Calu3 (cell line): ENCODE measurements at regions of chr7 and their contacts with region 1.

Region 1: GRCh38 chr7:30225863-30226613 is 58.4 kb upstream of the ZNRF2 start:
- DNase-seq: peak; percentile 82
- H3K4me3 Mint-ChIP-seq: peak overlapping the region; percentile 50
- H3K27ac Mint-ChIP-seq: peak overlapping the region; percentile 87
- H3K4me1 Mint-ChIP-seq: peaks cover 36% of the 10 kb centered on the region
- H3K27me3 Mint-ChIP-seq: peaks cover 2% of the 10 kb centered on the region
- CTCF ChIP-seq: no peak

Region 2: DNA sequence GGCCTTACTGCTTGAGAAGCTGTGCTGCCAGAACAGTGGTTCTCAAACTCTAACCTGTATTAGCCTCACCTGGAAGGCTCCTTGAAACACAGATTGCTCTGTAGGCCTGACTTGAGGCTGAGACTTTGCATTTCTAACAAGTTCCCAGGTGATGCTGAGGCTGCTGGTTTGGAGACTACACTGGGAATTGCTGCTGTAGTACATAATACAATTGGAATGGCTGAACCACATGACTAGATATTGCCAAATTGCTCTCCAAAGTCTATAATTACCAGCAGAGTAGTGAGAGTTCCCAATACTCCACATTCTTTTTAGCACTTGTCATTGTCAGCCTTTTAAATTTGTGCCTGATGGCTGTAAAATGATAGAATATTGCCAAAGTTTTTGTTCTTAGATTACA is 158.0 kb before region 1 on chr7:
- CTCF ChIA-PET with region 1: no interaction called
- intact Hi-C with region 1: no loop called
- DNase-seq: no peak
- H3K4me3 Mint-ChIP-seq: no peak overlapping the region
- H3K27ac Mint-ChIP-seq: no peak overlapping the region
- H3K4me1 Mint-ChIP-seq: no peaks in the 10 kb centered on the region
- H3K27me3 Mint-ChIP-seq: no peaks in the 10 kb centered on the region
- CTCF ChIP-seq: no peak

Region 3: DNA sequence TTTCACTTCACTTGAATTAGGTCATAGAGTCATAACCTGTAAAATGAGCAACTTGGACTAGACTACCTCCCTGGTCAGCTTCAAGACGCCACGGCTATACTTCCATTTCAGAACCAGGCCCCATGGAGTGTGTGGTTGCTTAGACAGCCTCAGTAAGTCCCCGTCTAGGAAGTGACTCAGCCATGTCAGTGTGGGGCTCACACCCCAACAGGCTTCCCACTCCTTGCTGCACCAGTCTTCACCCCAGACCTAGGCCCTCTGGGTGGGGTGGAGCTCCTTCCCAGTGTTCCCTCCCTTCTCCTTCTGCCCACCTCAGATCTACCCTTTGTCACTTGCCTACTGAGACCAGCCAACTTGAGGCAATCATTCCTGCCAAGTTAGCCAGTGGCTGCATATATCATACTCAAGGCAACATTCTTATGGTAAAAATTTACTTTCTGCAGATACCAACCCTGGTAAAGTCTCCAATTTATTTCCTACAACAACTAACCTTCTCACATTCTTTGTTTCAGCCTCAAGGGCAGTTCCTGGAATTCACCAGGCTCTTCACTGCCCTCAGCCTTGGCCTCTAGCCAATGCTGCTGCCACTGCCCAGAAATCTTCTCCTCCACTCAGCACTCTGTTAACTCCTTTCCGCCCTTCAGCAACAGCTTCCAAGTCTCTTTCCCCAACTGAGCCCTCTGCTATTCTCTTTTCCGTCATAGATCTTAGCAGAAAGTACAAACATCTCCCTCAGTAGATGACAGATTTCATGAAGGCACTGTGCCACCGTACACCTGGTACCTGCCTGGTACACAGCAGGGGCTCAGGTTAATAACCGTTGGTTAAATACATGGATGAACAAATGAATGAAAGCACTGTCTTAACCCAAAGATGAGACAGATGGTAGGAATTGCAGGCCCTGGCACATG is 27.1 kb after region 1 on chr7:
- CTCF ChIA-PET with region 1: interaction called, 7 read pairs
- intact Hi-C with region 1: loop called (anchors 2 kb)
- DNase-seq: peak; percentile 73
- H3K4me3 Mint-ChIP-seq: peak overlapping the region; percentile 3
- H3K27ac Mint-ChIP-seq: peak overlapping the region; percentile 9
- H3K4me1 Mint-ChIP-seq: peaks cover 51% of the 10 kb centered on the region
- H3K27me3 Mint-ChIP-seq: peaks cover 8% of the 10 kb centered on the region
- CTCF ChIP-seq: no peak

Region 4: DNA sequence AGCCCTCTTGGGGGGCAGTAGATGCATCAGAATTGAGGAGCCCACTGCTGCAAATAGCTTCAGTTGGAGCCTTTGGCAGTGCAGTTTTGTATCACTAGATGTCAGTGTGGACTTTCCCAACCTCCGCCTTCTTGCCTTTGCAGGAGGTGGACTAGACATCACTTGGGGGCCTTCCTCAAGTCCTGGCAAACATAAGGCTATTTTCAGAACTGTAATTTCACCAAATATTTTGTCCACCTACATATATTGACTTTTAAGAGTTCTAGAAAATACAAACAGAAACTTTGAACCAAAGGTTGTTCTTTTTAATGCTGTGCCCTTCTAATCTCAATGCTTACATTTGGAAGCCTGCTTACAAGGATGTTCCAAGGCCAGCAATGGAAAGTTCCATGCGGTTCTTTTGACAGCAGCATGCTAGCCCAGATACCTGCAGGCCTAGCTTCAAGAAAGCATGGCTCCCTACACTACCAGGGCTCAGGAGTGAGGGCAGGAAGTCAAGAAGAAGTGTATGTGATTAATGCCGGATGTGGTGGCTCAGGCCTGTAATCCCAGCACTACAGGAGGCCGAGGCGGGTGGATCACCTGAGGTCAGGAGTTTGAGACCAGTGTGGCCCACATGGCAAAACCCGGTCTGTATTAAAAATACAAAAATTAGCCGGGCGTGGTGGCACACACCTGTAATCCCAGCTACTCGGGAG is 50.3 kb after region 1 on chr7:
- CTCF ChIA-PET with region 1: interaction called, 5 read pairs
- intact Hi-C with region 1: loop called (anchors 2 kb)
- DNase-seq: peak; percentile 69
- H3K4me3 Mint-ChIP-seq: no peak overlapping the region
- H3K27ac Mint-ChIP-seq: no peak overlapping the region
- H3K4me1 Mint-ChIP-seq: peaks cover 15% of the 10 kb centered on the region
- H3K27me3 Mint-ChIP-seq: no peaks in the 10 kb centered on the region
- CTCF ChIP-seq: peak; percentile 83

Region 5: GRCh38 chr7:30412810-30413504 is 186.9 kb after region 1 on chr7:
- CTCF ChIA-PET with region 1: interaction called, 7 read pairs
- intact Hi-C with region 1: loop called (anchors 2 kb)
- DNase-seq: peak; percentile 66
- H3K4me3 Mint-ChIP-seq: no peak overlapping the region
- H3K27ac Mint-ChIP-seq: no peak overlapping the region
- H3K4me1 Mint-ChIP-seq: no peaks in the 10 kb centered on the region
- H3K27me3 Mint-ChIP-seq: no peaks in the 10 kb centered on the region
- CTCF ChIP-seq: peak; percentile 65